ENCODE measurements at regions of chr2 and their contacts with region 1.

Region 1: DNA sequence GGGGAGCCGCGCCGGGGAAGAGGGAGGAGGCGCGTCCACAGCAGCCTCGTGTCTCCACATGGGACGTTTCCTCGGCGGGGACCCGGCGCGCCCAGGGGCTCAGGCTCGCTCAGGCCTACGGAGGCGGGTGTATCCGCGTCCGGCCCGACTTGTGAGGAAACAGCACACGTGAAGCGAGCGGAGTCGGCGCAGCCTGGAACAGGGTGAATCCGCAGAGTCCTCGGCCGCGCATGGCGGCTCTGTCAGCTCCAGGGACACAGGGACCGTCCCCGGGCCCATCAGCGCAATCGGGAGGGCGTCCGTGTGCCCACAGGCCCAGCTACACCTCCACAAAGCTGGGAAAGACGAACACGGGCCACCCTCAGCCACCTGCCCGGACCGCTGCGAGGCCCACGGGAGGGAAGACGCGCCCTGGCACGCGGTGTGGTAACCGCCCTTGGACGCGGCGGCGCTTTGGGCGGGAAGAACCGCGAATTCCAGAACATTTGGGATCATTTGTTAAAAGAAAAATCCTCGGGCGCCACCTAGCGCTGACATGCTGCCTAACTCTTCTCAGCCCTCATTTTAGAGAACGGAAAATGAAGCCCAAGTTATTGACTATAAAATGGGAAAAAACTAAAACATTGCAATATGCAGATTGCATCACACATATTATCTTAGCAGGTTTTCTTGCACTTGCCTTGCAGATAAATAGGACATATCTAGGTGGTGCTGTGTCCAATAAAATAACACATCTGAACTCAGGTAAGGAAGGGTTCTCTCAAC is 40.4 kb downstream of the TMEM18 start:
- DNase-seq: peak; percentile 84
- ATAC-seq: peak; percentile 79
- H3K4me3 Mint-ChIP-seq: no peak overlapping the region
- H3K27ac Mint-ChIP-seq: no peak overlapping the region
- H3K4me1 Mint-ChIP-seq: peaks cover 9% of the 10 kb centered on the region
- H3K27me3 Mint-ChIP-seq: peaks cover 27% of the 10 kb centered on the region
- CTCF ChIP-seq: peak; percentile 84

Region 2: GRCh38 chr2:529425-529824 is 107.4 kb before region 1 on chr2:
- CTCF ChIA-PET with region 1: interaction called, 10 read pairs
- POLR2A ChIA-PET with region 1: no interaction called
- DNase-seq: no peak
- ATAC-seq: peak; percentile 86
- H3K4me3 Mint-ChIP-seq: no peak overlapping the region
- H3K27ac Mint-ChIP-seq: no peak overlapping the region
- H3K4me1 Mint-ChIP-seq: 0 out of 2 replicates have a peak, but pooled peaks cover 3% of the 10 kb centered on the region
- H3K27me3 Mint-ChIP-seq: no peaks in the 10 kb centered on the region; the same call in 1 of the 2 replicates
- CTCF ChIP-seq: no peak

Measured in WTC11 (cell line).